ENCODE measurements at regions of chr6 and their contacts with region 1.

Region 1: DNA sequence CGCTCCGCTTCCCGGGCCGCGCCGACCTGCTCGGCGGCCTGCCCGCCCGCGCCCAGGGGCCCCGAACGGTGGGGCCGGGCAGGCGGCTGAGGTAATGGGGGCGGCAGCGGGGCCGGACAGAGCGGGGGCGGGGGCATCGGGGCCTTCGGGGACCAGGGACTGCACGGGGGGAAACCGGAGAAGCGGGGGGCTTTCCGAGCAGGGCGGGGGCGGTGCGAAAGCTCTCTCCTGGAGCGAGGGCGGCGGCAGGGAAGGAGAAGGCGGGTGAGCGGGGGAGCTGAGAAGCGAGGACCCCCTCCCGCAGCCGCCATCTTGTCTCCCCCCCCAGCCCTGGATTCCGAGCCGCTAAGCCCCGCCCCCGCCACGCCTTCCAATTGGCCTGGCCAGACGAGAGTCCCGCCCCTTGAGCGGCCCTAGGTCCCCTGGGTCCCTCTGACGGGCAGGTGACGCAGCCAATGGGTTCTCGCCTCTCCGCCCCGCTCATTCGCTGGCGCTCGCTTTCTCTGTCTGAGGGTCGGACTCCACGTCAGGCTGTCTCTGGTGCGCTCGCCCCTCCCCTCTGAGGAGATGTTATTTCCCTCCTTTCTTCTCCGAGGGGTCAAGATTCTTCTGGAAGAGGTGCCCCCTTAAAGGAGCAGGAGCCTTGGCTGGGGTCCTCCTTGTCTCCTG is 470 bp downstream of the BRPF3 start:
- DNase-seq: peak; percentile 99
- ATAC-seq: peak; percentile 98

Region 2: GRCh38 chr6:35496841-35497570 is 700.0 kb before region 1 on chr6 and contains the start of gene TEAD3:
- intact Hi-C with region 1: no loop called
- DNase-seq: peak; percentile 75
- ATAC-seq: peak; percentile 65
- total RNA-seq, gene TEAD3: 25.4 TPM

Region 3: DNA sequence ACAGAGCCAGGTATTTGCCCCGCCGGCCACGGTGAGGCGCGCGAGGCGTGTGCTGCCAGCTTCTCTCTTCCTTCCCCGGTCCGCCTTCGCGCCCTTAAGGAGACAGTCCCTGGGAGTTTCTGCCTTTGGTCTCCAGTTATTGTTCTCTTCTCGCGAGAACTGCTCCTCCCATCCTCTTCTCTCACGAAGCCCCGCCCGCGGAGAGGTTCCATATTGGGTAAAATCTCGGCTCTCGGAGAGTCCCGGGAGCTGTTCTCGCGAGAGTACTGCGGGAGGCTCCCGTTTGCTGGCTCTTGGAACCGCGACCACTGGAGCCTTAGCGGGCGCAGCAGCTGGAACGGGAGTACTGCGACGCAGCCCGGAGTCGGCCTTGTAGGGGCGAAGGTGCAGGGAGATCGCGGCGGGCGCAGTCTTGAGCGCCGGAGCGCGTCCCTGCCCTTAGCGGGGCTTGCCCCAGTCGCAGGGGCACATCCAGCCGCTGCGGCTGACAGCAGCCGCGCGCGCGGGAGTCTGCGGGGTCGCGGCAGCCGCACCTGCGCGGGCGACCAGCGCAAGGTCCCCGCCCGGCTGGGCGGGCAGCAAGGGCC is 169.4 kb before region 1 on chr6 and contains the start of gene MAPK14:
- intact Hi-C with region 1: loop called (anchors 5 kb)
- DNase-seq: peak; percentile 99
- ATAC-seq: peak; percentile 96
- total RNA-seq, gene MAPK14: 29.3 TPM

Region 4: GRCh38 chr6:36123257-36124139 is 73.5 kb before region 1 on chr6:
- intact Hi-C with region 1: loop called (anchors 10 kb)
- DNase-seq: peak; percentile 83
- ATAC-seq: peak; percentile 88